Naive thymus-derived CD8-positive, alpha-beta T cell (primary cell): ENCODE measurements at regions of chr15 and their contacts with region 1.

Region 1: DNA sequence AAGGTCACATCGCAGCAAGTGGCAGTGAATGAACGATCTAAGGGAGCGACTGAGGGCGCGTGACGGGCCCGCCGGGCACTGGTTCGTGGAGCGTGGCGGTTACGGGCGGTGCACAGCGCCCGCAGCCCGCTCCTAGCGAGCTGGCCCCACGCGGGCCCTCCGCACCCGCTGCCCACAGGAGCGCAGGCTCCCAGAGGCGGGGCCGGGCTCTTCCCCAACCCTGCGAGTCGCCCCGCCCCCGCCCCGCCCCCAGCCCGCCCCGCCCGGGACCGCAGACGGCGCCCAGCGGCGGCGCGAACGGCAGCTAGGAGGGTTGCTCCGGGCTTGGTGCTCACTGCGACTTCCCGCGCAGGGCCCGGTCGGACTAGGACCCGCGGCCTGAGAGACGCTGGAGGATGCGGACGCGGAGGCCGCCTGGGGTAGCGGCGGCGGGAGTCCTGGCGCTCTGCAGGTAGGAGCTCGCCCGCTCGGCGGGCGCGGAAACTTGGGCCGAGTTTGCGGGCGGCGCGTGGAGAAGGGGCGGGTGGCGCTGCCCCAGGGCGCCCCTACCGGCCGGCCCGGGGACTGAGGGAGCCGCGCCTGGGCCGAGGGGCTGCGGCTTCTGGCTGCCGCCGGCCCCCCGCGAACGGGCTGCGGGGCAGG is at the start of gene C15orf39:
- DNase-seq: peak; percentile 59 to 91 (median 78)
- ATAC-seq: peak; percentile 62
- H3K4me3 Mint-ChIP-seq: peak within 1 kb of the TSS; percentile 88 to 97 (median 94)
- H3K27ac Mint-ChIP-seq: peak within 1 kb of the TSS; percentile 83 to 97 (median 94)
- H3K4me1 Mint-ChIP-seq: peaks cover 11 to 58% (median 42%) of the 10 kb centered on the region in 4 donors
- H3K27me3 Mint-ChIP-seq: no peaks in the 10 kb centered on the region
- polyA plus RNA-seq, gene C15orf39: 1.0 to 4.5 (median 2.3) TPM

Region 2: GRCh38 chr15:75023181-75023871 is 178.4 kb before region 1 on chr15 and contains the start of gene PPCDC:
- POLR2A ChIA-PET with region 1: interaction called, 30 read pairs
- DNase-seq: peak; percentile 83 to 96 (median 90)
- ATAC-seq: peak; percentile 100
- H3K4me3 Mint-ChIP-seq: peak within 1 kb of the TSS; percentile 88 to 99 (median 98)
- H3K27ac Mint-ChIP-seq: peak within 1 kb of the TSS; percentile 90 to 97 (median 96)
- H3K4me1 Mint-ChIP-seq: peaks cover 10 to 27% (median 21%) of the 10 kb centered on the region in 4 donors
- H3K27me3 Mint-ChIP-seq: no peaks in the 10 kb centered on the region
- polyA plus RNA-seq, gene PPCDC: 12.0 to 16.7 (median 13.0) TPM

Region 3: GRCh38 chr15:75029378-75030022 is 172.2 kb before region 1 on chr15:
- POLR2A ChIA-PET with region 1: interaction called, 30 read pairs
- DNase-seq: peak; percentile 69 to 93 (median 82)
- ATAC-seq: peak; percentile 90 to 96
- H3K4me3 Mint-ChIP-seq: peak overlapping the region in 4 of 10 donors; percentile 16 to 56 (median 48)
- H3K27ac Mint-ChIP-seq: peak overlapping the region in 5 of 10 donors; percentile 68 to 83 (median 76)
- H3K4me1 Mint-ChIP-seq: peaks cover 10 to 42% (median 16%) of the 10 kb centered on the region in 4 donors
- H3K27me3 Mint-ChIP-seq: no peaks in the 10 kb centered on the region